Mammary epithelial cell (primary cell): ENCODE measurements at regions of chr11 and their contacts with region 1.

Region 1: DNA sequence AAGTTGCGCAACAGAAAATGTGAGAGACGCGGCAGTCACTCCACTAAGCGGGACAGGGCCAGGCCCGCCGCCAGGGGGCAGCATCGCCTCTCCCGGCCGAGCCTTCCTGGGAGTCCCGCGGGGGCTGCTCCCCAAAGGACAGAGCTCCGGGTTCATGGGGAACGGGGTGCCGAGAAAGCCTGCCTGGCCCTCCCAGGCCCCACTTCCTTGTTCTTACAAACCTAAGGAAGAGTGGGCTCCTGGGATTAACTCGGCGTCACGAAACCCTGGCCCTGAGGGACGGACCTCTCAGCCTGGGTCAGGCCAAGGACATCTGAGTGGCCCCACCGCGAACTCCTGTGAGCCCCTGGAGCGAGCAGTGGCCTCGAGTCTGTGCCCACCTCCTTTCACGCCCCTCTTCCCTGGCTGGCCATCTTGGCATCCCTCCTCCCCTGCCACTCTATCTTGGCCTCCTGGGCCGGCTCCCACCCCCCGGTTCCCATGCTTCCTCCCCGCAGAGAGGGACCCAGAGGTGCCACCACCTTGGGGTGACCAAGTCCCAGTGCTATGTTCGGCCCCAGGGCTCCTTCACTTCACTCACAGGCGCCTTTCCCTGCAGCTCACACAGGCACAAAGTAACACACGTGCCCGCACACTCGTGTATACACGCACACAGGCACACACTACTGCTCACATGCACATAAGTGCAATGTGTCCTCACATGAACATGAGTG is 99.9 kb upstream of the FGF3 start:
- DNase-seq: peak; percentile 39
- H3K4me3 ChIP-seq: no peak overlapping the region
- H3K27ac ChIP-seq: no peak overlapping the region
- H3K4me1 ChIP-seq: peaks cover 33% of the 10 kb centered on the region
- H3K27me3 ChIP-seq: no peaks in the 10 kb centered on the region
- CTCF ChIP-seq: peak; percentile 79 to 96

Region 2: GRCh38 chr11:69874984-69875624 is 44.0 kb before region 1 on chr11:
- CTCF ChIA-PET with region 1: no interaction called
- dilution Hi-C with region 1: loop called (anchors 5 kb)
- in situ Hi-C with region 1: no loop called
- intact Hi-C with region 1: no loop called
- DNase-seq: no peak
- H3K4me3 ChIP-seq: no peak overlapping the region
- H3K27ac ChIP-seq: no peak overlapping the region
- H3K4me1 ChIP-seq: no peaks in the 10 kb centered on the region
- H3K27me3 ChIP-seq: no peaks in the 10 kb centered on the region
- CTCF ChIP-seq: no peak

Region 3: GRCh38 chr11:69985641-69986439 is 66.7 kb after region 1 on chr11:
- CTCF ChIA-PET with region 1: no interaction called
- dilution Hi-C with region 1: loop called (anchors 5 kb)
- in situ Hi-C with region 1: no loop called
- intact Hi-C with region 1: no loop called
- DNase-seq: no peak
- H3K4me3 ChIP-seq: peak overlapping the region; percentile 55 to 72 (median 67)
- H3K27ac ChIP-seq: peak overlapping the region; percentile 61
- H3K4me1 ChIP-seq: peaks cover 26% of the 10 kb centered on the region
- H3K27me3 ChIP-seq: no peaks in the 10 kb centered on the region
- CTCF ChIP-seq: no peak

Region 4: GRCh38 chr11:70016666-70017367 is 97.7 kb after region 1 on chr11:
- CTCF ChIA-PET with region 1: no interaction called
- dilution Hi-C with region 1: loop called (anchors 5 kb)
- in situ Hi-C with region 1: no loop called
- intact Hi-C with region 1: no loop called
- DNase-seq: peak; percentile 98
- H3K4me3 ChIP-seq: no peak overlapping the region
- H3K27ac ChIP-seq: peak overlapping the region; percentile 83
- H3K4me1 ChIP-seq: peaks cover 53% of the 10 kb centered on the region
- H3K27me3 ChIP-seq: no peaks in the 10 kb centered on the region
- CTCF ChIP-seq: no peak

Region 5: GRCh38 chr11:70082829-70083228 is 163.7 kb after region 1 on chr11:
- CTCF ChIA-PET with region 1: no interaction called
- dilution Hi-C with region 1: no loop called
- in situ Hi-C with region 1: no loop called
- intact Hi-C with region 1: loop called (anchors 2 kb)
- DNase-seq: no peak
- H3K4me3 ChIP-seq: no peak overlapping the region
- H3K27ac ChIP-seq: no peak overlapping the region
- H3K4me1 ChIP-seq: peaks cover 49% of the 10 kb centered on the region
- H3K27me3 ChIP-seq: no peaks in the 10 kb centered on the region
- CTCF ChIP-seq: peak; percentile 37 to 51

Region 6: DNA sequence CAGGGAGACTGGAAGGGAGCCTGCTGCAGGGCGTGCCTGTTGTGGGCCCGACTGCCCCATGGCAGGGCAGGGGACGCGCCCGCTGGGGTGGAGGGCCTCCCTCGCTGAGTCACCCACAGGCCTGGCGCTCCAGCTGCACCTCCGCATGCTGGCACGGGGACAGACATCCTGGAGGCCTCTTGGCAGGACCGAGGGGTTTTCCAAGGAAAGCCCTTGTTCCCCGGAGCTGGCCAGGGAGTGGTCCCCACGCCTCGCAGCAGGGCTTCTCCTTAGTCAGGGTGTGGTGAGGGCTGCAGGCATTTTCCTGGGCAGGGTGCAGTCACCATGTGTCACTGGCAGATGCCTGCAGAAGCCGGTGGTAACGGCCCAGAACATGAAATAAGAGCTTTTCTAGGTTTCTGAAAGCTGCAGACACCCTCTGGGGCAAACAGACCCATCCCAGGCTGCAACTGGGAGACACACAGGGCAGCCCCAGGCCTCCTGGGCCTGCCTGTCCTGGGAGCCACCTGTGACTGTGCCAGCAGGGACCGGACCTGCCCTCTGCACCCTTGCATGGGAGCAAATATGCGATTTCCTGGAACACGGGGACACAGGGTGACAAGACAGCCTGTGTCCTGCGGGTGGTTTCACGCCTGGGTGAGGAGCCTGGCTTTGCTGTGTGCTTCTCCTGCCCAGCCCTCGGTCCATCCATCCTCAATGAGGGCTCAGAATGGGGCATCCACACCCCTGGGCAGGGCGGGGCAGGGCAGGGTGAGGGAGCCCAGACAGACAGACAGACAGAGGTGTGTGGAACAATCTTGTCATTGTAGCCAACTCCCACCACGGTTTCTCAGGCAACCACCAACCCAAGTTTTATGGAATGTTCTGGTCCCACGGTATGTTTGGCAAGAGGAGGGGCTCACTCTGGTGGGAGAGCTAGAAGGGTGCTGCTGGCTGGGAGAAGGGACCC is 240.8 kb after region 1 on chr11:
- CTCF ChIA-PET with region 1: no interaction called
- dilution Hi-C with region 1: loop called (anchors 5 kb)
- in situ Hi-C with region 1: no loop called
- intact Hi-C with region 1: no loop called
- DNase-seq: peak; percentile 99
- H3K4me3 ChIP-seq: no peak overlapping the region
- H3K27ac ChIP-seq: peak overlapping the region; percentile 86
- H3K4me1 ChIP-seq: peaks cover 56% of the 10 kb centered on the region
- H3K27me3 ChIP-seq: no peaks in the 10 kb centered on the region
- CTCF ChIP-seq: no peak